ENCODE measurements at regions of chr7 and their contacts with region 1.

Region 1: DNA sequence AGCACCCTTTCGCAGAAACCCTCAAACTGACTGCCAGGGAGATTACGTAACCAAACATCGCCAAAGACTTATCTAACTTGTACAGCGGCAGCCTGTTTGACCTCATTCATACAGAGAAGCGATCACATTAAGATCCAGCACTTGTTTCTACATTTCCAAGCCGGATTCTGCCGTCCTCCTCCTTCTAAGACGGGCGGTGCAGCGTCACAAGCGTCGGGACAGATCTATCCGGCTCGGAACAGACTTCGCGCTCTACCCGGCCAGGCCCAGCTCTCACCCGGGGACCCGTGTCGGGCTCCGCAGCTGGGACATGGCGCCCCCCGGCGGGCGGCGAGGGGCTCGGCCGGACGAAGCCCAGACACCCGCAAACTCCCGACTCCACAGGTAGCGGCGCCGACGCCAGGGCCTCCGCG is 373 bp downstream of the H2AZ2 start:
- DNase-seq: peak; percentile 92
- H3K4me3 Mint-ChIP-seq: peak overlapping the region; percentile 92
- H3K27ac Mint-ChIP-seq: peak overlapping the region; percentile 95
- H3K4me1 Mint-ChIP-seq: peaks cover 41% of the 10 kb centered on the region
- H3K27me3 Mint-ChIP-seq: no peaks in the 10 kb centered on the region

Region 2: DNA sequence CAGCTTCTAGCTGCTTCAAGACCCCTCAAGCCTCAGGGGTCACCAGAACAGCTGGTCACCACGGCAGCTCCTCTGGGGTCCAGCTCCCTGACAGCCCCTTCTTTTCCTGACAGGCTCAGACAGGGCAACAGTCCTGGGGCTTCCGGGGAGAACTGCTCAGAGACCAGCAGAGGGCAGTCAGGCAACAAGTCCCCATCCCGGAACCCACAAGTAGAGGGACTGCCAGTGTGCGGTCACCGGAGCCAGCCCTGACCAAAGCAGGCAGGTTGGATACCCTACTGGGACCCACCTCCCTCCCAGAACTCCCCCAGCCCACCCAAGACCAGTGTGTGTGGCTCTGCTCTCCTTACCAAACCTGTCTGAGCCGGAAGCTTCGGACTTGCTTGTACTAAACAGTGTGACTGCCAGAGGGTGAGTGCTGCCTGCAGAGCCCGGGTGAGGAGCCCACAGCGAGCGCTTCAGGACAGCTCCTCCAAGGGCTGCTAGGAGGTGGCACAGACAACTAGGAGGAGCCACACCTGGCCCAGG is 606.5 kb before region 1 on chr7:
- CTCF ChIA-PET with region 1: no interaction called
- intact Hi-C with region 1: loop called (anchors 5 kb)
- DNase-seq: peak; percentile 82
- H3K4me3 Mint-ChIP-seq: no peak overlapping the region
- H3K27ac Mint-ChIP-seq: peak overlapping the region; percentile 30
- H3K4me1 Mint-ChIP-seq: no peaks in the 10 kb centered on the region
- H3K27me3 Mint-ChIP-seq: no peaks in the 10 kb centered on the region

Region 3: DNA sequence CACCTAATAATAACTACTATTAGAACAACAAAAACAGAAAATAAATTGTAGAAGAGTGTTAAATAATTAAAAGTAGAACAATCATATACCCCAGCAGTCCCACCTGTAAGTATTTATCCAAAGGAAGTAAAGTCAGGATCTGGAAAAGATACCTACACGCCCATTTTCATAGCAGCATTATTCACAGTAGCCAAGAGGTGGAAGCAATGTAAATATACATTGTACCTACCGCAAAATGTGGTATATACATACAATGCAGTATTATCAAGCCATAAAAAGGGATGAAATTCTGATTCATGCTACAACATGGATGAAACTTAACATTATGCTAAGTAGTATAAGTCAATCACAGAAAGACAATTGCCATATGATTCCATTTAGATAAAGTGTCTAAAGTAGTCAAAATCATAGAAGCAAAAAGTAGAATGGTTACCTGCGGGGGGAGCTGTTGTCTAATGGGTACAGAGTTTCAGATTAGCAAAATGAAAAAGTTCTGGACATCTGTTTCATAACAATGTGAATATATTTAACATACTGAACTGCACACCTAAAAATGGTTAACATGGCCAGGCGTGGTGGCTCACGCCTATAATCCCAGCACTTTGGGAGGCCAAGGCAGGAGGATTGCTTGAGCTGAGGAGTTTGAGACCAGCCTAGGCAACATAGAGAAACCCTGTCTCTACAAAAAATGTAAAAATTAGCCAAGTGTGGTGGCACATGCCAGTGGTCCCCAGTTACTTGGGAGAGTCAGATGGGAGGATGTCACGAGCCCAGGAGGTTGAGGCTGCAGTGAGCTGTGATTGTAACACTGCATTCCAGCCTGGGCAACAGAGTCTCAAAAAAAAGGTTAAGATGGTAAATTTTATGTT is 259.4 kb before region 1 on chr7:
- CTCF ChIA-PET with region 1: interaction called, 3 read pairs
- intact Hi-C with region 1: loop called (anchors 1 kb)
- DNase-seq: peak; percentile 83
- H3K4me3 Mint-ChIP-seq: no peak overlapping the region
- H3K27ac Mint-ChIP-seq: no peak overlapping the region
- H3K4me1 Mint-ChIP-seq: peaks cover 4% of the 10 kb centered on the region
- H3K27me3 Mint-ChIP-seq: peaks cover 1% of the 10 kb centered on the region

Region 4: DNA sequence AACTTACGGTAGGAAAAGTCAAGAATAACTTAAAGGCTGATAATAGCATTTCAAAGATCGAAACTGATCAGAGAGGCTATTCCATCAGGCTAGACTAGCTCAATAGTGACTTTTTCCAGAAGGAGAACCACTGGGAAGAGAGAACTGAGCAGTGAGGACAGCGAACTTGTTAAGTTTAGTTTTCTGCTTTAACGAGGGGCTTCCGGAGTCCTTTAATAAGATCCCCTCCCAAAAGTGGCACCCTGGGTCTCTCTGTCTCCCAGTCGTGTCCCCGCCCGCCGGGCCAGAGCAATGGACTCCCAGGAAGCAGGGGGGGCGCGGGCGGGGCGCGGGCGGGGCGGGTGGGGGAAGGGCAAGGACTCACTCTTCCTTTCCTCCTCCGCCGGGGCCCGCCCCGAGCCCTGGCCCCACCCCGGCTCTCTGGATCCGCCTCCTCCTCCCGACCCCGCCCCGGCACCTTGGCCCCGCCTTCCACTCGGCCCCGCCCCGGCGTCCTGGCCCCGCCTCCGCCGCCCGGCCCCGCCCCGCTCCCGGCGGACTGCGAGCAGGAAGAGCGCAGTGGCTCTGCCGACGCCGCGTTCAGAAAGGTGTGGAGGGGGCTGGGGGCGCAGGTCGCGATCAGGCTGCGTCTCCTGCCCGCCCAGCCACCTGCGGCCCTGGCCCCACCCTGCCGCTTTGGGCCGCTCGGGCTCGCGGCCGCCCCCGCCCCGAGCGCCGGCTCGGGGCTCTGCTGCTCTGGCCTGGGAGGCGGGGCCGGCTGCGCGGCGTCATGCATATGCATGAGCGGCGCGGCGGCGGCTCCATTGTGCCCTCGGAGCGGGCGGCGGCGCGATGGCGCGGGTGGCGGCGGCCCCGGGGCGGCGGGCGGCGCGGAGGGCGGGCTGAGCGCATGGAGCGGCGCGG is 99.2 kb before region 1 on chr7 and contains the start of gene ZMIZ2:
- CTCF ChIA-PET with region 1: interaction called, 3 read pairs
- intact Hi-C with region 1: loop called (anchors 1 kb)
- DNase-seq: peak; percentile 92
- H3K4me3 Mint-ChIP-seq: peak within 1 kb of the TSS; percentile 82
- H3K27ac Mint-ChIP-seq: peak within 1 kb of the TSS; percentile 88
- H3K4me1 Mint-ChIP-seq: peaks cover 39% of the 10 kb centered on the region
- H3K27me3 Mint-ChIP-seq: no peaks in the 10 kb centered on the region
- total RNA-seq, gene ZMIZ2: 83.1 to 86.5 TPM

Region 5: DNA sequence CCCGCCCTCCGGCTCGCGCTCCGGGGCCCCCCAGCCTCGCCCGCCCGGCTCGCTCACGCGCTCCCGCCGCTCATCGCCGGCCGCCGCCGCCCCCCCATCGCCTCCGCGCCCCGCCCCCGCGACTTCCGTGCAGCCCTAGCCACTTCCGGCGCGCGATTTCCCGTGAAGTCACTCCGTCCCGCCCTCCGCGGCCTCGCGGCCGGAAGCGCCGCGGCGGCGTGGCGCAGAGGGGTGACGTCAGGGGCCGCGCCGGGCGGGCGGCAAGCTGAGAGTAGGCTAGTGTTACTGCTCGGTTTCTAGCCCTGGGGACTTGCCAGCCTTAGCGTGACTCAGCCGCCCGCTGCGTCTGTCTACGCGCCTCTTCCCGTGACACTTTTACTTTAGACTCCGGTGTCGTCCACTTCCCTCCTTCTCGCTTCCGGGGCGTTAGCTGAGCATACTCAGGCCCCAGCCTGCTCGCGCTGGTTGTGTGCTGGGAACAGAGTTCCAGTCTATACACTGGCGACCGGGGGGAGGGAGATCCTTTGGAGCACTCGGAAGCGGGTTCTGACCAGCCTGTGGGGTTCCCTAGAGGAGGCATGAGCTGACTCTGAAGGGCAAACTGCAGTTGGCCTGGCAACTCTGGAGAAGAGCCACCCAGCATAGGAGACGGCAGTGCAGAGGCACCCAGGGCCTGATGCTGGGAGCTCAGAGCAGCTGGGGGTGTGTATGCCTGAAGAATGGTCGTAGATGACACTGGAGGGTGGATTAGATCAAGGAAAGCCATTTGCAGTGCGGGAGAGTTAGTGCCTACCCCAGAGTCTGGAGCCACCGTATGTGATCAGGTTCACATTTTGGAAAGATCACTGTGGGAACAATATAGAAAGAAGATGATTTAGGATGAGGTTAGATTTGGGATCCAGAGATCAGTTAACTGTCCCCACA is 38.1 kb after region 1 on chr7 and contains the start of gene PURB:
- CTCF ChIA-PET with region 1: interaction called, 49 read pairs
- intact Hi-C with region 1: loop called (anchors 1 kb)
- DNase-seq: peak; percentile 98
- H3K4me3 Mint-ChIP-seq: peak within 1 kb of the TSS; percentile 96
- H3K27ac Mint-ChIP-seq: peak within 1 kb of the TSS; percentile 100
- H3K4me1 Mint-ChIP-seq: peaks cover 46% of the 10 kb centered on the region
- H3K27me3 Mint-ChIP-seq: no peaks in the 10 kb centered on the region
- total RNA-seq, gene PURB: 12.9 to 13.1 TPM

Region 6: GRCh38 chr7:44999245-45000095 is 152.0 kb after region 1 on chr7:
- CTCF ChIA-PET with region 1: no interaction called
- intact Hi-C with region 1: loop called (anchors 1 kb)
- DNase-seq: peak; percentile 100
- H3K4me3 Mint-ChIP-seq: peak overlapping the region; percentile 88
- H3K27ac Mint-ChIP-seq: peak overlapping the region; percentile 94
- H3K4me1 Mint-ChIP-seq: peaks cover 56% of the 10 kb centered on the region
- H3K27me3 Mint-ChIP-seq: no peaks in the 10 kb centered on the region

Measured in activated naive CD4-positive, alpha-beta T cell treated with anti-CD3 and anti-CD28 coated beads for 36 hours (primary cell).